PC-9 (cell line): ENCODE measurements at regions of chr9 and their contacts with region 1.

Region 1: GRCh38 chr9:83027153-83027891 is 35.6 kb downstream of the RASEF start:
- DNase-seq: peak; percentile 44 to 93
- H3K4me3 ChIP-seq: peak overlapping the region; percentile 23; the same call in 1 of the 2 replicates
- H3K27ac ChIP-seq: peak overlapping the region; percentile 83
- H3K4me1 ChIP-seq: peaks cover 26% of the 10 kb centered on the region
- H3K27me3 ChIP-seq: no peaks in the 10 kb centered on the region
- CTCF ChIP-seq: no peak

Region 2: GRCh38 chr9:83041771-83042170 is 14.4 kb after region 1 on chr9:
- CTCF ChIA-PET with region 1: interaction called, 3 read pairs
- POLR2A ChIA-PET with region 1: no interaction called
- intact Hi-C with region 1: loop called (anchors 1 kb)
- DNase-seq: peak in 1 of 2 experiments; percentile 92
- H3K4me3 ChIP-seq: no peak overlapping the region; the same call in 1 of the 2 replicates
- H3K27ac ChIP-seq: peak overlapping the region; percentile 50
- H3K4me1 ChIP-seq: peaks cover 26% of the 10 kb centered on the region
- H3K27me3 ChIP-seq: no peaks in the 10 kb centered on the region
- CTCF ChIP-seq: no peak

Region 3: GRCh38 chr9:83097633-83098032 is 70.3 kb after region 1 on chr9:
- CTCF ChIA-PET with region 1: no interaction called
- POLR2A ChIA-PET with region 1: no interaction called
- intact Hi-C with region 1: no loop called
- DNase-seq: no peak
- H3K4me3 ChIP-seq: no peak overlapping the region
- H3K27ac ChIP-seq: no peak overlapping the region
- H3K4me1 ChIP-seq: no peaks in the 10 kb centered on the region
- H3K27me3 ChIP-seq: no peaks in the 10 kb centered on the region
- CTCF ChIP-seq: no peak

Region 4: DNA sequence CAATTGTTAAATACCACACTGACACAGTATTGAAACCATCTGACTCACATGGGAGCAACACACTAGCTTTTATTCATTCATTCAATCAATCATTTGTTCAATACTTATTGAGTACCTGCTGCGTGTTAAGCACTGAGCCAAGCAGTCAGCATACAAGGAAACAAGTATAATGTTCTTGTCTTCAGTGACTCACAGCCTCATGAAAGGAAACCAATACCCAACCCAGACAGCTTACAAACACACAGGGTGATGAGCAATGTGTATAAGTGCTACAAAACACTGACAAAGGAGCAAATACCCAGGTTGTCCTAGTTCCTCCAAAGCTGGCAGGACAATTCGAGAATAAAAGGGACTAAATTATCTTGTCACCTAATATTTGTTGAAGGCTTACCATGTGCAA is 103.2 kb after region 1 on chr9:
- CTCF ChIA-PET with region 1: no interaction called
- POLR2A ChIA-PET with region 1: no interaction called
- intact Hi-C with region 1: no loop called
- DNase-seq: peak in 1 of 2 experiments; percentile 69
- H3K4me3 ChIP-seq: no peak overlapping the region
- H3K27ac ChIP-seq: no peak overlapping the region
- H3K4me1 ChIP-seq: no peaks in the 10 kb centered on the region
- H3K27me3 ChIP-seq: no peaks in the 10 kb centered on the region
- CTCF ChIP-seq: no peak

Region 5: GRCh38 chr9:83204047-83204446 is 176.7 kb after region 1 on chr9:
- CTCF ChIA-PET with region 1: no interaction called
- POLR2A ChIA-PET with region 1: no interaction called
- intact Hi-C with region 1: no loop called
- DNase-seq: no peak
- H3K4me3 ChIP-seq: no peak overlapping the region
- H3K27ac ChIP-seq: no peak overlapping the region
- H3K4me1 ChIP-seq: no peaks in the 10 kb centered on the region
- H3K27me3 ChIP-seq: no peaks in the 10 kb centered on the region
- CTCF ChIP-seq: peak; percentile 56